SK-N-SH (cell line): ENCODE measurements at regions of chr14 and their contacts with region 1.

Region 1: GRCh38 chr14:106556665-106557289 is 1030.4 kb downstream of the TMEM121 start:
- DNase-seq: peak; percentile 46
- H3K4me3 ChIP-seq: no peak overlapping the region
- H3K27ac ChIP-seq: no peak overlapping the region
- H3K4me1 ChIP-seq: no peaks in the 10 kb centered on the region
- H3K27me3 ChIP-seq: peaks cover 4% of the 10 kb centered on the region; the same call in 1 of the 2 replicates
- CTCF ChIP-seq: peak; percentile 82
- EP300 ChIP-seq: no peak
- RAD21 ChIP-seq: peak; percentile 34

Region 2: GRCh38 chr14:106538201-106538600 is 18.6 kb before region 1 on chr14:
- CTCF ChIA-PET with region 1: interaction called, 12 read pairs
- POLR2A ChIA-PET with region 1: no interaction called
- DNase-seq: no peak
- H3K4me3 ChIP-seq: no peak overlapping the region
- H3K27ac ChIP-seq: no peak overlapping the region
- H3K4me1 ChIP-seq: no peaks in the 10 kb centered on the region
- H3K27me3 ChIP-seq: no peaks in the 10 kb centered on the region
- CTCF ChIP-seq: no peak
- EP300 ChIP-seq: no peak
- RAD21 ChIP-seq: no peak